ENCODE measurements at regions of chr6 and their contacts with region 1.

Region 1: GRCh38 chr6:88881451-88881850 is 82.0 kb downstream of the RNGTT start:
- DNase-seq: no peak
- H3K4me3 ChIP-seq: no peak overlapping the region
- H3K27ac ChIP-seq: no peak overlapping the region
- H3K4me1 ChIP-seq: no peaks in the 10 kb centered on the region
- H3K27me3 ChIP-seq: no peaks in the 10 kb centered on the region
- CTCF ChIP-seq: no peak

Region 2: DNA sequence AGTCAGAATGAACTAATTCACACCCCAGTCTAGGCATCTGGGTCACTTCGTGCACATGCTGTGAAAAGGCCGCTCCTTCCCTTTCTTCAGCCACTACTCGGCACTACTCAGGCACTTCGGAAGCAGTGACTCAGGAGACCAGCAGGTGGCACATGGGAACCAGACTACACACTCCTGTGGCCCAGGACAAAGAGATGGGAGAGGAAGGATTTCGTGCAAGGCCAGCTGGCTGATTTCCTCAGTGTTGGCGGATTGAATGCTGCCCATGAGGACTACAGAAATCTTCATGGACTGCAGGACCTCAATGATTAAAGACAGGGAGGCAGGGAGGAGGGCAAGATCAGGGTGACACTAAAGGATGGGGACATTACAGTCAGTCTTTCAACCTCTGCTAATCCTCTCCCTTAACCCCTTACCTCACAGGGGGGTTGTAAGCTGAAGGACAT is 951.6 kb before region 1 on chr6:
- CTCF ChIA-PET with region 1: interaction called, 25 read pairs
- POLR2A ChIA-PET with region 1: no interaction called
- intact Hi-C with region 1: no loop called
- DNase-seq: peak; percentile 42 to 62
- H3K4me3 ChIP-seq: no peak overlapping the region
- H3K27ac ChIP-seq: no peak overlapping the region
- H3K4me1 ChIP-seq: no peaks in the 10 kb centered on the region
- H3K27me3 ChIP-seq: no peaks in the 10 kb centered on the region
- CTCF ChIP-seq: peak; percentile 78

Region 3: DNA sequence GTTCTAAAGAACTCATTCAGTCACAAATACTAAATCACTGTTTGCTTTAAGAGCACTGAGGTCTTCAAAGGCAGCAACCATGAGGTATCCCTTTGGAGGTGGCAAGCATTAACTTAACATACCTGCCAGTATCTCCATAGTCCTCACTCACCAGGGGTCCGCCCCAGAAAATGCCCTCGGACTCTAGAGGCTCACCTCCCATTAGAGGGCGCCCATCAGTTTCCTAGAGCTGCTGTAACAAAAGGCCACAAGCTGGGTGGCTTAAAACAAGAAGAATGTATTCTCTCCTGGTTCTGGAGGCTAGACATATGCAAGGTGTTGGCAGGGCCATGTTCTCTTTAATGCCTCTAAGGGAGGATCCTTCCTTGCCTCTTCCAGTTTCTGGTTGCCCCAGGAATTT is 93.9 kb after region 1 on chr6:
- CTCF ChIA-PET with region 1: no interaction called
- POLR2A ChIA-PET with region 1: interaction called, 11 read pairs
- intact Hi-C with region 1: no loop called
- DNase-seq: no peak
- H3K4me3 ChIP-seq: no peak overlapping the region
- H3K27ac ChIP-seq: no peak overlapping the region
- H3K4me1 ChIP-seq: no peaks in the 10 kb centered on the region
- H3K27me3 ChIP-seq: no peaks in the 10 kb centered on the region
- CTCF ChIP-seq: no peak

Region 4: GRCh38 chr6:88989215-88989614 is 107.8 kb after region 1 on chr6:
- CTCF ChIA-PET with region 1: no interaction called
- POLR2A ChIA-PET with region 1: no interaction called
- intact Hi-C with region 1: no loop called
- DNase-seq: no peak
- H3K4me3 ChIP-seq: no peak overlapping the region
- H3K27ac ChIP-seq: no peak overlapping the region
- H3K4me1 ChIP-seq: no peaks in the 10 kb centered on the region
- H3K27me3 ChIP-seq: no peaks in the 10 kb centered on the region
- CTCF ChIP-seq: no peak